GM10248 (cell line): ENCODE measurements at regions of chr1 and their contacts with region 1.

Region 1: DNA sequence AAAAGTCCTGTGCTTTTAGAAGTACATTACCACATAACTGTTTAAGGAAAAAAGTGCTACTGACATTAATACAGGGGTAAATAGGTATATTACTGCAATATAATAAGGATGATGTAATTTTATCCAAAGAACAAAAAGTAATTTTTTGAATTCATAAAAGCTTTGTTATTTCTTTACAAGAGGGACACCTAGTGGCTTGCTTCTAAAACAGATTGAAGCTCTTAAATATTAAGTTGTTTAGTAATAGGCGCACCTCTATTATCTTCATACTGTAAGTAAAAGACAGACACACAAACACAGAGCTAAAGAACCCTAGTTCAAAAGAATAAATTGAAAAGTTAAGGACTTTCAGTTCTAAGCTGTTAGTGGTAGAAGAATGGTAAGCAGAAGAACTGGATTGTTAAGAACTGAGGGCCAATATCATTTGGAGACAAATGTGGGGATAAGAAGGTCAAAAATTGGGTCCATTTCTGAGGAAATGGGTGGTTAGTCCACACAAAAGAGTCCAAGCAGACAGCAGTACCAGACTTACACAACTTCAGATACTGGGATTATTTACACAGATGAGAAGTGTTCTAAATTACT is 15.4 kb downstream of the ZNHIT6 start:
- DNase-seq: no peak
- CTCF ChIP-seq: peak; percentile 23

Region 2: GRCh38 chr1:85307987-85308832 is 384.6 kb before region 1 on chr1:
- CTCF ChIA-PET with region 1: interaction called, 14 read pairs
- POLR2A ChIA-PET with region 1: no interaction called
- DNase-seq: peak; percentile 66
- CTCF ChIP-seq: peak; percentile 87

Region 3: DNA sequence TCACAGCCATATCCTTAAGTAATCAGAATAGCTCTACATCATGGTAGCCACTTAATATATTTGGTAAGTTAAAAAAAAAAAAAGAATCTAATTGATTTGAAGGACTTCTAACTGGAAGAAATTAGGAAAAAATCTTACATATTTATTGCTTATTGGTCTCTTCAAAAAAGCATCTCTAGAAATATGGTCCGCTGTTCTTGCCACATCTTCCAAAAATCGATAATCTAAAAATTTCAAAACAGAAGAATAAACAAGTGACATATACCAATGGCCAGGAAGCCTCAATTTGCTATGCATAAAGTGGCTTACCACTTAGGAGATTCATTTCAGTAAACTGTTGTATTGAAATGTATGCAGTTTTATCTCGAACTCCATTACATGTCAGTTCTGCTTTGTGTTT is 13.1 kb after region 1 on chr1:
- CTCF ChIA-PET with region 1: interaction called, 21 read pairs
- POLR2A ChIA-PET with region 1: no interaction called
- DNase-seq: no peak
- CTCF ChIP-seq: no peak